ENCODE measurements at regions of chr18 and their contacts with region 1.

Region 1: DNA sequence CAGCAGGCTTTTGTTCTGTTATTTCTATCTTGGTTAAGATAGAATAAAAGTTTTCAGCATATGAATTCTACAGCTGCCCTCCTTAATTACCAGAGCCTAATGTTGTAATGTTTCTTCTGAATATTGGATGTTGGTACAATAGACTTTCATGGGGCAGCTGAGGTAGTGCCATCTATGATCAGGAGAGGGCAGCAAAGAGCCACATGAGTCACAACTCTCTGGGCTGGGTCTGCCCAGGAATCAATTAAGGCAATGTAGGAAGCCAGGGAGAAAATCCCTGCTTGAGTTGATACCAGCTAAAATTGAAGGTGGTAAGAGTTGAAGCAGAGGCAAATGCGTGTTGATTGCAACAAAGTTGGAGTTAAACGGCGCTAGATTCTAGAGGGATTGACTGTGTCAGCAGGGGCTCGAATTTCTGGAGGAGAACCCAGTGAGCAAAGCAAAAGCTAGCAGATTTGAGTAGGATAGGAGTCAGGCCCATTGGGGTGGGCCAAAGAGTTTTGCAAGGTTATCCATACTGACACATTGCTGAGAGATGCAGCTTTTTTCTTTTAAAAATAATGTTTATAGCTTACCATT is 10.6 kb upstream of the MC5R start:
- DNase-seq: peak; percentile 50
- ATAC-seq: peak; percentile 90
- H3K4me3 ChIP-seq: no peak overlapping the region
- H3K27ac ChIP-seq: no peak overlapping the region
- H3K4me1 ChIP-seq: peaks cover 9 to 15% of the 10 kb centered on the region in 2 experiments
- H3K27me3 ChIP-seq: no peaks in the 10 kb centered on the region
- CTCF ChIP-seq: peak; percentile 50 to 91 (median 89); a peak in 5 of 6 replicates
- POLR2A ChIP-seq: no peak
- RAD21 ChIP-seq: peak; percentile 58

Region 2: GRCh38 chr18:13823707-13824395 is 10.5 kb after region 1 on chr18 and contains the start of gene MC5R:
- CTCF ChIA-PET with region 1: interaction called, 18 read pairs
- POLR2A ChIA-PET with region 1: no interaction called
- RAD21 ChIA-PET with region 1: no interaction called
- intact Hi-C with region 1: no loop called
- DNase-seq: no peak
- ATAC-seq: peak; percentile 98
- H3K4me3 ChIP-seq: peak within 1 kb of the TSS; percentile 7 to 34; a peak in 3 of 4 replicates
- H3K27ac ChIP-seq: no peak within 1 kb of the TSS
- H3K4me1 ChIP-seq: peaks cover 0 to 7% of the 10 kb centered on the region in 2 experiments; a peak in 1 of 4 replicates
- H3K27me3 ChIP-seq: peaks cover 21% of the 10 kb centered on the region; the same call in 1 of the 2 replicates
- CTCF ChIP-seq: peak; percentile 58 to 91 (median 80); a peak in 5 of 6 replicates
- POLR2A ChIP-seq: no peak
- RAD21 ChIP-seq: peak; percentile 78
- total RNA-seq, gene MC5R: not detected